Transverse colon (tissue), 4 donors: ENCODE measurements at regions of chr16 and their contacts with region 1.

Region 1: DNA sequence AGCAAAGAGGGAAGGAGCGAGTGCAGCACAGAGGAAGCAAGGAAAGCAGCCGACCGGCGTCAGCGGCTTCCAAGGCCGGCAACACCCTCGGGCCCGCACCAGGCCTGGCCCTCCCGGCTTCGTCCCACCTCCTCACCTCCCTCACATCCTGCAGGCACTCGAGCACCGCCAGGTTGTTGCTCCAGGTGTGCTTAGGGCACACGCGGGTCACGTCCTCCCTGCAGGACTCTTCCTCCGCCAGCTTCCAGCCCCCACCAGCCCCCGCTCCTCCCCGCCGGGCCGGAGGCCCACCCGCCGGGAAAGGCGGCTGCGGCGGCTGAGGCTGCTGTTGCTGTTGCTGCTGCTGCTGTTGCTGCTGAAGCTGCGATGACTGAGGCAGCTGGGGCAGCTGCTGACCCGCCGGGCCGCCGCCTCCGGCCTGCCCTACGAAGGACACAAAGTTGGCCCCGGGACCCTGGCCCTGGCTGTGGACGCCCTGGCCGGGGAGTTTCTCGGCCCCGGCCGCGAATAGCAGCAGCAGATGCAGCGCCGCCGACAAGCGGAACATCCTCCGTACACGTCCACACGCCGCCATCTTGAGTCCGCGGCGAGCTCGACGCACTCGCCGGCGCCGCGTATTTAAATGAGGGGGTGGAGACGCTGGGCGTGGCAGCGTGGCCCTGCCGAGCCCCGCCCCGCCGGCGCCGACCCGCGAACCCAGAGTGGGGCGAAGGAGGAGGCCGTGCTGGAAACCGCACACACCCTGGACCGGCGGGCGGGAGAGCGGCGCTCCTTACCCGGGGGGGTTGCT is at the start of gene GLG1:
- DNase-seq: peak; percentile 94
- H3K4me3 ChIP-seq: peak within 1 kb of the TSS; percentile 65 to 98 (median 78)
- H3K27ac ChIP-seq: peak within 1 kb of the TSS; percentile 92 to 99 (median 94)
- H3K4me1 ChIP-seq: peaks cover 21 to 49% (median 33%) of the 10 kb centered on the region in 4 donors
- H3K27me3 ChIP-seq: no peaks in the 10 kb centered on the region
- CTCF ChIP-seq: no peak
- EP300 ChIP-seq: no peak
- POLR2A ChIP-seq: peak; percentile 94
- total RNA-seq, gene GLG1: 77.0 to 154 (median 127) TPM

Region 2: GRCh38 chr16:74309789-74310781 is 296.6 kb before region 1 on chr16:
- in situ Hi-C with region 1: loop called in 1 of 4 experiments (anchors 25 kb)
- intact Hi-C with region 1: no loop called
- DNase-seq: no peak
- H3K4me3 ChIP-seq: no peak overlapping the region
- H3K27ac ChIP-seq: no peak overlapping the region
- H3K4me1 ChIP-seq: no peaks in the 10 kb centered on the region
- H3K27me3 ChIP-seq: no peaks in the 10 kb centered on the region
- CTCF ChIP-seq: peak; percentile 61 to 71 (median 65)
- EP300 ChIP-seq: no peak
- POLR2A ChIP-seq: no peak

Region 3: DNA sequence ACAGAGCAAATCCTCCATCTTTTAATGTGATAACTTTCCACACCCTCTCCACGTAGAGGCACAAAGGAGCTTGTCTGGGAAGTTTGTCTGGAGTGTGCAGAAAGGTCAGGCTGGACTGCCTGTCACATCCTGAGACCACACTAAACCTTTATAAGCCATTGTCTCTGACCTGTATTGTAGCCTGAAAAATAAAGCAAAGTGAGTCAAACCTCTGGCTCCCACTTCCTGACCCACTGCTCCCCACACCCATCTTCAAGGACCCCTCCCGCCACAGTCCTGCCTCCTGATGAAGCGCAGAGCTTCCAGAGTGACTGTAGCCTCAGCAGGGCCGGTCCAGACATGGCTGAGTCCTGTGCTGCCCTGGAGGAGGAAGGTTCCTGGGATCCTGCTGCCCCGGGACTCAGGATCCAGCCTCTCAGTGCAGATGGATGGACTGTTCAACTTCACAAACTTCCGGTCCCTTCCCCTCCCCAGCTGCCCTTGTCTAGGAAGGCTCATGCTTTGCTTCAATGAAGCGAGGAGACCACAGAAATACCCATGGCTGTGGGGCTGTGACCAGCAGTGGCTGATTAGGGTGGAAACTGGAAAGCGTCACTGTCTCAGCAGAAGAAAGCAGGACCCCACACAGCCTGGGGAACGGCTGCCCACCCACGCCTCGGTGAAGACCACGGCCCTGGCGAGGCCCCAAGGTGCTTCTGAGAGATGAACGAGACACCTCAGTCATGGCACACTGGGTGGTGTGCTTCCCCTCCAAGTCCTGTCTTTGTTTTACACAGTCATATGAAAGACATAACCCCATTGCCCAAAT is 154.6 kb before region 1 on chr16:
- in situ Hi-C with region 1: loop called in 2 of 4 experiments (anchors 25 kb)
- intact Hi-C with region 1: no loop called
- DNase-seq: no peak
- H3K4me3 ChIP-seq: no peak overlapping the region
- H3K27ac ChIP-seq: no peak overlapping the region
- H3K4me1 ChIP-seq: peaks cover 6 to 32% (median 16%) of the 10 kb centered on the region in 4 donors
- H3K27me3 ChIP-seq: no peaks in the 10 kb centered on the region
- CTCF ChIP-seq: no peak
- EP300 ChIP-seq: no peak
- POLR2A ChIP-seq: no peak

Region 4: DNA sequence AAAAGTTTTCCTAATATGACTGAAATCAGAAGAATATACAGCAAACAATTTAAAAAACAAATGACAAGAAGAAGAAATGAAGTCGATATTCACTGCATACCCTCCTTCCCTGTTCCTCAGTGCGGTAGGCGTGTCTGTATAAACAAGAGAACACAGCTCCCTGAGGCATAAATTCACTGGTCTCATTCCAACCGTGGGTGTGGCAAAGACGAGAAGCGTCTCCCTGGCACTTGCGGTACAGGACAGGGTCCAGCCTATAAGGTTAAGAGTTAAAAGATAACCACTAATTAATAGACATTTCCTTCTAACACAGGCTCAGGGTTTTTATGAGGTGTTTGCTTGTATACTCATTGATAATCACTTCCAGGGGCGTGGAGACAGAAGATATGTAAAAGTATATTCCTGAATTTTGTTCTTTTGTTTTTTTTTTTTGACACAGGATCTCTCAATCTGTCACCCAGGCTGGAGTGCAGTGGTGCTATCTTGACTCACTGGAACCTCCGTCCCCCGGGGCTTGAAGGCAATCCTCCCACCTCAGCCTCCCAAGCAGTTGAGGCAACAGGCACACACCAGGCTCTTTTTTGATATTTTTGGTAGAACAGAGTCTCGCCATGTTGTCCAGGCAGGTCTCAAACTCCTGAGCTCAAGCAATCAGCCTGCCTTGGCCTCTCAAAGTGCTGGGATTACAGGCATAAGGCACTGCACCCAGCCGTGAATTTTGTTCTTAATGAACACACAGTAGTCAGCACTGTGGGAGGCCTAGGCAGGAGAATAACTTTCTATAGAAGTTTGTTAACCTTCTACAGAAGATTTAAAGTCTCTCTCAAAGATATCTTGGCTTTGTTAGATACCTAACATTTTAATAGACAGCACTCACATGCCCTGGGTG is 126.3 kb before region 1 on chr16:
- in situ Hi-C with region 1: loop called in 1 of 4 experiments (anchors 25 kb)
- intact Hi-C with region 1: no loop called
- DNase-seq: peak; percentile 86
- H3K4me3 ChIP-seq: no peak overlapping the region
- H3K27ac ChIP-seq: peak overlapping the region; percentile 60 to 83 (median 71)
- H3K4me1 ChIP-seq: peaks cover 8 to 40% (median 32%) of the 10 kb centered on the region in 4 donors
- H3K27me3 ChIP-seq: no peaks in the 10 kb centered on the region
- CTCF ChIP-seq: no peak
- EP300 ChIP-seq: no peak
- POLR2A ChIP-seq: no peak

Region 5: DNA sequence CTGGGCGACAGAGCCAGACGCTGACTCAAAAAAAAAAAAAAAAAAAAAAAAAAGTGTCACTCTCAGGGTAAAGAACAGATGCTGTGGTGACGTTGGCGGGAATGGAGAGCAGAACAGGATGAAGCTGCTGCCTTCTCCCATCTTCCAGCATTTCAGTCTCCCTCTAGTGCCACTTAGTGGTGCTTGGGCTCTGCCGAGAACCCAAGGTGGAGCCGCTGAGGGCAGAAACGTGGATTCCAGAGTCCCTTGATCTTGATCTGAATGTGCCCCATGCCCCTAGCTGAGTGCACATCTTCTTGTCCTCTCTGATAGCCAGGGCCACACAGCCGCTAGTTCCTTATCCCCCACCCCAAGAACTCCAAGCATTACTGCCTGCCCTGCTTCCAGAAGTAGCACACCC is 211.1 kb after region 1 on chr16:
- in situ Hi-C with region 1: no loop called
- intact Hi-C with region 1: no loop called
- DNase-seq: no peak
- H3K4me3 ChIP-seq: no peak overlapping the region
- H3K27ac ChIP-seq: no peak overlapping the region
- H3K4me1 ChIP-seq: peaks cover 0 to 6% (median 2%) of the 10 kb centered on the region in 4 donors
- H3K27me3 ChIP-seq: peaks cover 4% of the 10 kb centered on the region
- CTCF ChIP-seq: no peak
- EP300 ChIP-seq: no peak
- POLR2A ChIP-seq: no peak